ENCODE measurements at regions of chr7 and their contacts with region 1.

Region 1: GRCh38 chr7:127651556-127652332 is at the start of gene SND1:
- DNase-seq: peak; percentile 95 to 100 (median 98)
- ATAC-seq: peak; percentile 93
- H3K4me3 ChIP-seq: peak within 1 kb of the TSS; percentile 99
- H3K4me3 Mint-ChIP-seq: peak within 1 kb of the TSS; percentile 93
- H3K27ac ChIP-seq: peak within 1 kb of the TSS; percentile 89 to 94
- H3K27ac Mint-ChIP-seq: no peak within 1 kb of the TSS
- H3K4me1 ChIP-seq: peaks cover 43% of the 10 kb centered on the region
- H3K4me1 Mint-ChIP-seq: peaks cover 55% of the 10 kb centered on the region
- H3K27me3 ChIP-seq: no peaks in the 10 kb centered on the region
- H3K27me3 Mint-ChIP-seq: no peaks in the 10 kb centered on the region
- CTCF ChIP-seq: no peak
- total RNA-seq, gene SND1: 104 to 113 TPM

Region 2: GRCh38 chr7:127347567-127348246 is 304.0 kb before region 1 on chr7:
- CTCF ChIA-PET with region 1: no interaction called
- POLR2A ChIA-PET with region 1: no interaction called
- intact Hi-C with region 1: loop called in 1 of 2 experiments (anchors 5 kb)
- DNase-seq: peak; percentile 48 to 90 (median 68)
- ATAC-seq: peak; percentile 99
- H3K4me3 ChIP-seq: peak overlapping the region; percentile 38
- H3K4me3 Mint-ChIP-seq: peak overlapping the region; percentile 36
- H3K27ac ChIP-seq: no peak overlapping the region
- H3K27ac Mint-ChIP-seq: no peak overlapping the region
- H3K4me1 ChIP-seq: peaks cover 7% of the 10 kb centered on the region
- H3K4me1 Mint-ChIP-seq: peaks cover 36% of the 10 kb centered on the region
- H3K27me3 ChIP-seq: no peaks in the 10 kb centered on the region
- H3K27me3 Mint-ChIP-seq: no peaks in the 10 kb centered on the region
- CTCF ChIP-seq: peak; percentile 42

Region 3: GRCh38 chr7:127413962-127414361 is 237.8 kb before region 1 on chr7:
- CTCF ChIA-PET with region 1: no interaction called
- POLR2A ChIA-PET with region 1: no interaction called
- intact Hi-C with region 1: no loop called
- DNase-seq: peak in 3 of 14 experiments; percentile 54 to 80 (median 55)
- ATAC-seq: peak; percentile 82
- H3K4me3 ChIP-seq: peak overlapping the region; percentile 4
- H3K4me3 Mint-ChIP-seq: peak overlapping the region; percentile 58
- H3K27ac ChIP-seq: peak overlapping the region; percentile 71 to 74
- H3K27ac Mint-ChIP-seq: peak overlapping the region; percentile 93
- H3K4me1 ChIP-seq: peaks cover 23% of the 10 kb centered on the region
- H3K4me1 Mint-ChIP-seq: peaks cover 65% of the 10 kb centered on the region
- H3K27me3 ChIP-seq: no peaks in the 10 kb centered on the region
- H3K27me3 Mint-ChIP-seq: no peaks in the 10 kb centered on the region
- CTCF ChIP-seq: no peak

Region 4: GRCh38 chr7:127678947-127679346 is 27.2 kb after region 1 on chr7:
- CTCF ChIA-PET with region 1: no interaction called
- POLR2A ChIA-PET with region 1: no interaction called
- intact Hi-C with region 1: no loop called
- DNase-seq: no peak
- ATAC-seq: no peak
- H3K4me3 ChIP-seq: no peak overlapping the region
- H3K4me3 Mint-ChIP-seq: no peak overlapping the region
- H3K27ac ChIP-seq: no peak overlapping the region
- H3K27ac Mint-ChIP-seq: no peak overlapping the region
- H3K4me1 ChIP-seq: peaks cover 2% of the 10 kb centered on the region
- H3K4me1 Mint-ChIP-seq: peaks cover 45% of the 10 kb centered on the region
- H3K27me3 ChIP-seq: no peaks in the 10 kb centered on the region
- H3K27me3 Mint-ChIP-seq: no peaks in the 10 kb centered on the region
- CTCF ChIP-seq: no peak

Region 5: DNA sequence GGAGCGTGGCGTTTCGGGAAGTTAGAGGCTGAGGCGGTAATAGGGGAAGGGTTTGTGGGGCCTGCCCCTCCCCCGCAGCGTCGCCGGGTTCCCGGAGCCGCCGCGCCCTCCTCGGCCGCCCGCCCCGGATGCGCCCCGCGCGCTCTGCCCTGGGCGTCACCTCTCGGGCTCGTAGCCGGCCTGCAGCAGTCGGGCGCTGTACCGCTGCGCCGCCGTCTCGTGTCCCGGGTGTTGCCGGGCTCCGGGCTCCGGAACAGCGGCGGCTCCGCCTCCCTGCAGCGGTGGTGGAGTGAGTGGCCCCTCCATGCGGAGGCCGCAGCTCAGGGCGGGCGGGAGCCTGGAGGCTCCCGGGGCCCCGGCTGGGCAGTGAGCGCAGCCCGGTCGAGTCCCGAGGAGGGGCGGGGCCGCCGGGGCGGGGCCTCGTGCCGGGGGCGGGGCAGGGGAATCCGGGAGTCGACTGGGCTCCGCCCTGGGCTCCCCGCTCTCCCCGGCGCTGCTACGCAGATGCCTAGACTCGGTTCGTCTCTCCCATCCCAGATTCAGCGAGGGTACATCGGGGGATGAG is 757.9 kb after region 1 on chr7 and contains the start of gene IMPDH1:
- CTCF ChIA-PET with region 1: no interaction called
- POLR2A ChIA-PET with region 1: no interaction called
- intact Hi-C with region 1: loop called in 1 of 2 experiments (anchors 5 kb)
- DNase-seq: peak; percentile 65 to 91 (median 85)
- ATAC-seq: peak; percentile 72
- H3K4me3 ChIP-seq: peak within 1 kb of the TSS; percentile 95
- H3K4me3 Mint-ChIP-seq: peak within 1 kb of the TSS; percentile 92
- H3K27ac ChIP-seq: peak within 1 kb of the TSS; percentile 66 to 85
- H3K27ac Mint-ChIP-seq: peak within 1 kb of the TSS; percentile 86
- H3K4me1 ChIP-seq: peaks cover 52% of the 10 kb centered on the region
- H3K4me1 Mint-ChIP-seq: peaks cover 44% of the 10 kb centered on the region
- H3K27me3 ChIP-seq: no peaks in the 10 kb centered on the region
- H3K27me3 Mint-ChIP-seq: no peaks in the 10 kb centered on the region
- CTCF ChIP-seq: no peak
- total RNA-seq, gene IMPDH1: 26.5 to 27.0 TPM

Region 6: DNA sequence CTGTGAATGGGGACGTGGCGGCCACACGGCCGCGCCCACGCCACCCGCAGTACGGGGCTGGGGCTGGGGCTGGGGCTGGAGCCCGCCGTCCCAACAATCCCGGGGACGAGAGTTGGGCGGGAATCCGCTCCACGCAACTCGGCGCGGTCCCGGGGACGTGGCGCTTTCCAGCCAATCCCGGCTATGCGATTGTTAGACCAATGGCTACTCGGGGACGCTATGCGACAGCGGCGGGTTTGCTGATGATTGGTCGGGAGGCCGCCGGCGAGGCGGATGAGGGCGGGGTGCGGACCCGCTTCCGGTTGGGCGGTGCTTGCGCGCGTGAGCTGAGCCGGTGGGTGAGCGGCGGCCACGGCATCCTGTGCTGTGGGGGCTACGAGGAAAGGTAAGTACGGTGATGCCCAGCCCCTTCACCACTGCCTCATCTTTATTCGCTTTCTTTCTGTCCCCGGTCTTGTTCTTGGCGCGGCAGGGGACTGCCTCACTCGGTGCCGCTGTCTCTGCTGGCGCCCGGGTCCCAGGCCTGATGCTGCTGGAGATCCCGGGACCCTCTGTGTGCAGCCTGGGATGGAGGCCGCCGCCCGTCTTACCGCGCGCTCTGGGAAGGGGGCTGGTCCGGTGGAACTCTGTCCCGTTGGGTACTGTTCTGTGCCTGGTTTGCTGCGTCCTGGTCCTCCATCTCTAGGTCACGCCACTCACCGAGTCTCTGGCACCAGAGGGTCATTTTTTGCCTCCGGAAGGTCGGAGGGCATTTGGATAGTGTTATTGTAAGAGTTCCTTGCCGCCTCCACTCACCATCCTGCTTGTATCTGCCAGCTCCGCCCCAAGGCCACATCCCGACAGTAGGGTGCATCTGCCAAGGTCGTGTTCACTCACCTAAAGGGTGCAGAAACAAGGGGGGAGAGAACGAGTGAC is 1087.6 kb after region 1 on chr7 and contains the start of gene CALU:
- CTCF ChIA-PET with region 1: no interaction called
- POLR2A ChIA-PET with region 1: no interaction called
- intact Hi-C with region 1: loop called in 1 of 2 experiments (anchors 10 kb)
- DNase-seq: peak; percentile 87 to 97 (median 91)
- ATAC-seq: peak; percentile 91
- H3K4me3 ChIP-seq: peak within 1 kb of the TSS; percentile 97
- H3K4me3 Mint-ChIP-seq: peak within 1 kb of the TSS; percentile 100
- H3K27ac ChIP-seq: peak within 1 kb of the TSS; percentile 80 to 93
- H3K27ac Mint-ChIP-seq: peak within 1 kb of the TSS; percentile 96
- H3K4me1 ChIP-seq: peaks cover 19% of the 10 kb centered on the region
- H3K4me1 Mint-ChIP-seq: peaks cover 46% of the 10 kb centered on the region
- H3K27me3 ChIP-seq: no peaks in the 10 kb centered on the region
- H3K27me3 Mint-ChIP-seq: no peaks in the 10 kb centered on the region
- CTCF ChIP-seq: no peak
- total RNA-seq, gene CALU: 28.4 to 29.9 TPM

Measured in CD4-positive, alpha-beta T cell (primary cell).